Body of pancreas (tissue), 4 donors: ENCODE measurements at regions of chr7 and their contacts with region 1.

Region 1: DNA sequence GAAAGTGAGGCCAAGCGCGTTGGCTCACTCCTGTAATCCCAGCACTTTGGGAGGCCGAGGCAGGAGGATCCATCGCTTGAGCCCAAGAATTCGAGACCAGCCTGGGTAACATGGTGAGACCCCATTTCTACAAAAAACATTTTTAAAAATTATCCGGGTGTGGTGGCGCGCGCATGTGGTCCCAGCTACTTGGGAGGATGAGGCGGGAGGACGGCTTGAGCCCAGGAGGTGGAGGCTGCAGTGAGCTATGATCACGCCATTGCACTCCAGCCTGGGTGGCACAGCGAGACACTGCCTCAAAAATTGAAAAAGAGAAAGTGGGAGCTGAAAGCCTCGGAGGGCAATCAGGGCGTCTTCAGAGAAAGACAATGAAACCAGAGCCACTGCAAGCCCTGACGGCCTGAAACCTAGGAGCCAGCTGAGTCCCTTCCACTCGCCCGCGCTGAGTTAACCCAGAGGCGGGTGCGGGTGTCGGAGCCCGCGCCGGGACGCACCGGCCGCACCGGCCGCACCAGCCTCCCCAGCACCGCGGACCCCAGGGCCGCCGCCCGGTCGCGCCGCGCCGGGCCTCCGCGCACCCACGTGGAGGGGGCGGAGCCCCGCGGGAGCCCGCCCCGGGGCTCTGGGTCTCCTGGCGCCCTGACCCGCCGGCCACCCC is 22.4 kb downstream of the ZFAND2A start:
- DNase-seq: no peak
- ATAC-seq: peak; percentile 76
- H3K4me3 ChIP-seq: peak overlapping the region; percentile 81 to 100
- H3K27ac ChIP-seq: peak overlapping the region; percentile 63 to 85 (median 72)
- H3K4me1 ChIP-seq: peaks cover 14% of the 10 kb centered on the region
- H3K27me3 ChIP-seq: no peaks in the 10 kb centered on the region
- CTCF ChIP-seq: no peak
- POLR2A ChIP-seq: peak in 1 of 3 donors; percentile 2

Region 2: GRCh38 chr7:1086588-1087464 is 50.8 kb before region 1 on chr7:
- intact Hi-C with region 1: loop called (anchors 10 kb)
- DNase-seq: peak; percentile 65 to 80 (median 72)
- ATAC-seq: peak; percentile 73
- H3K4me3 ChIP-seq: no peak overlapping the region
- H3K27ac ChIP-seq: peak overlapping the region in 1 of 4 donors; percentile 9
- H3K4me1 ChIP-seq: peaks cover 23% of the 10 kb centered on the region
- H3K27me3 ChIP-seq: no peaks in the 10 kb centered on the region
- CTCF ChIP-seq: peak; percentile 76 to 93 (median 85)
- POLR2A ChIP-seq: no peak

Region 3: GRCh38 chr7:1192171-1192676 is 54.6 kb after region 1 on chr7:
- intact Hi-C with region 1: no loop called
- DNase-seq: no peak
- ATAC-seq: no peak
- H3K4me3 ChIP-seq: no peak overlapping the region
- H3K27ac ChIP-seq: no peak overlapping the region
- H3K4me1 ChIP-seq: no peaks in the 10 kb centered on the region
- H3K27me3 ChIP-seq: peaks cover 0 to 5% of the 10 kb centered on the region in 2 donors
- CTCF ChIP-seq: no peak
- POLR2A ChIP-seq: no peak

Region 4: GRCh38 chr7:1210321-1210978 is 72.8 kb after region 1 on chr7:
- intact Hi-C with region 1: no loop called
- DNase-seq: no peak
- ATAC-seq: no peak
- H3K4me3 ChIP-seq: no peak overlapping the region
- H3K27ac ChIP-seq: no peak overlapping the region
- H3K4me1 ChIP-seq: peaks cover 11% of the 10 kb centered on the region
- H3K27me3 ChIP-seq: peaks cover 0 to 14% of the 10 kb centered on the region in 2 donors
- CTCF ChIP-seq: no peak
- POLR2A ChIP-seq: no peak